Posterior vena cava (tissue), 2 donors: ENCODE measurements at regions of chr9 and their contacts with region 1.

Region 1: DNA sequence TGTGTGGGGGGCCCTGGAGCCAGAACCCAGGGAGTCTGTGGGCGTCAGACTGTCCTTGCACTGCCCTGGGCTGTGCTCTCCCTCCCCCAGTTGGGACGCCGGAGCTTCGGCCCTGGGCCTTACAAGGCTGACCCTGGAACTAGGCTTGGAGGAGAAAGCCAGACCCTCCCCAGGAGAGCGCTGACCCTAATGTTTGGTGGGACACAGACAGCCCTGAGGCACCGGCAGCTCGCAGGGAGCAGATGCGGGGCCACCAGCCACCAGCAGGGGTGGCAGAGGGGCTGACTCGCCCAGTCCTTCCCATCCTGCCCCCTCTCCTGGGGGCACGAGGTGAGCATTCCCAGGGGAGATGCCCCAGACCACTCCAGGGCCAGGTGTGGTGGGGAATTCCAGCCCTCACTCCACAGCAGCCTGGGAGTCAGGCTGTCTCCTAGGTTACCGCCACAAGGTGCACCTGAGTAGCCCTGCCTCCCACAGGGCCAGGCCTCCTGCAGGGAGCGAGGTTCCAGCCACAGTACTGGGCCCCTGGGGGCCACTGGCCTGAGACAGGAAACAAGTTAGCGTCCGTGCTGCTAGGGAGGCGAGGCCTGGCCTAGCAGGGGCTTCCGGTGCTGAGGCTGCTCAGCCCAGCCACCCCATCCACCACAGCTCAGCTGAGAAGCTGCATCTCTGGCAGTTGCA is 134.6 kb downstream of the OLFM1 start:
- DNase-seq: peak; percentile 70

Region 2: GRCh38 chr9:135103001-135103446 is 119.1 kb before region 1 on chr9:
- intact Hi-C with region 1: no loop called
- DNase-seq: no peak

Region 3: GRCh38 chr9:135294826-135295225 is 72.7 kb after region 1 on chr9:
- intact Hi-C with region 1: loop called in 1 of 2 experiments (anchors 10 kb)
- DNase-seq: peak; percentile 51